ENCODE measurements at regions of chr3 and their contacts with region 1.

Region 1: GRCh38 chr3:31288641-31289100 is 244.1 kb upstream of the STT3B start:
- DNase-seq: peak; percentile 97
- ATAC-seq: peak; percentile 89
- H3K4me3 ChIP-seq: peak overlapping the region in 1 of 3 experiments; percentile 7; a peak in 1 of 6 replicates
- H3K27ac ChIP-seq: peak overlapping the region; percentile 75
- H3K4me1 ChIP-seq: peaks cover 97% of the 10 kb centered on the region
- H3K27me3 ChIP-seq: no peaks in the 10 kb centered on the region
- CTCF ChIP-seq: 0 out of 2 replicates have a peak, but pooled peaks have one; percentile 13
- EP300 ChIP-seq: peak in 1 of 2 experiments; percentile 94; a peak in 2 of 4 replicates
- POLR2A ChIP-seq: no peak
- RAD21 ChIP-seq: no peak

Region 2: GRCh38 chr3:31203960-31204795 is 84.5 kb before region 1 on chr3:
- CTCF ChIA-PET with region 1: no interaction called
- POLR2A ChIA-PET with region 1: no interaction called
- in situ Hi-C with region 1: no loop called
- intact Hi-C with region 1: loop called (anchors 1 kb)
- DNase-seq: peak; percentile 74
- ATAC-seq: peak; percentile 90
- H3K4me3 ChIP-seq: no peak overlapping the region; a peak in 1 of 6 replicates
- H3K27ac ChIP-seq: peak overlapping the region; percentile 19
- H3K4me1 ChIP-seq: peaks cover 18% of the 10 kb centered on the region
- H3K27me3 ChIP-seq: no peaks in the 10 kb centered on the region
- CTCF ChIP-seq: no peak
- EP300 ChIP-seq: no peak
- POLR2A ChIP-seq: no peak
- RAD21 ChIP-seq: no peak

Region 3: DNA sequence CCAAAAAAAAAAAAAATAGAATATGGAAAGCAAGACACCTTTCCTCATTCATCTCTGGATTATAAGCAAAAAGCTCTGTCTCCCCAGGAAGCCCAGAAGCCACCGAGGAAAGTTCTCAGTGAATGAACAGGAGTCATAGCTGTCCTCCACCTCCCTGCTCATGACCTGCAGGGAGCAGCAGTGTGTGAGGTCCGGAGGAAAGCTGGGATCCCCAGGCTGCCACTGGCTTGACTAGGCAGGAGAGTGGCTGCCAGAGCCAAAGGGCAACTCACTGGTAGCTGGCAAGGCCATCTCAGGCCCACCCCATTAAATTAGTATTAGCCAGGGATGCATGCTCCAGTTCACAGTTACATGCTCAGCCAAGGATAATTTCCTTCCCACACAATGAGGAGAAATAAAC is 52.5 kb after region 1 on chr3:
- CTCF ChIA-PET with region 1: no interaction called
- POLR2A ChIA-PET with region 1: interaction called, 6 read pairs
- in situ Hi-C with region 1: no loop called
- intact Hi-C with region 1: loop called (anchors 5 kb)
- DNase-seq: peak; percentile 52
- ATAC-seq: peak; percentile 100
- H3K4me3 ChIP-seq: no peak overlapping the region
- H3K27ac ChIP-seq: no peak overlapping the region
- H3K4me1 ChIP-seq: peaks cover 19% of the 10 kb centered on the region
- H3K27me3 ChIP-seq: no peaks in the 10 kb centered on the region
- CTCF ChIP-seq: peak; percentile 80
- EP300 ChIP-seq: no peak
- POLR2A ChIP-seq: no peak
- RAD21 ChIP-seq: peak; percentile 84

Region 4: GRCh38 chr3:31377045-31377642 is 88.5 kb after region 1 on chr3:
- CTCF ChIA-PET with region 1: no interaction called
- POLR2A ChIA-PET with region 1: interaction called, 6 read pairs
- in situ Hi-C with region 1: loop called (anchors 5 kb)
- intact Hi-C with region 1: loop called (anchors 1 kb)
- DNase-seq: peak; percentile 100
- ATAC-seq: peak; percentile 98
- H3K4me3 ChIP-seq: no peak overlapping the region; a peak in 1 of 6 replicates
- H3K27ac ChIP-seq: peak overlapping the region; percentile 74
- H3K4me1 ChIP-seq: peaks cover 50% of the 10 kb centered on the region
- H3K27me3 ChIP-seq: no peaks in the 10 kb centered on the region; a peak in 1 of 5 replicates
- CTCF ChIP-seq: 0 out of 2 replicates have a peak, but pooled peaks have one; percentile 12
- EP300 ChIP-seq: peak; percentile 99 to 100
- POLR2A ChIP-seq: no peak
- RAD21 ChIP-seq: peak; percentile 44; the same call in 1 of the 2 replicates

Region 5: DNA sequence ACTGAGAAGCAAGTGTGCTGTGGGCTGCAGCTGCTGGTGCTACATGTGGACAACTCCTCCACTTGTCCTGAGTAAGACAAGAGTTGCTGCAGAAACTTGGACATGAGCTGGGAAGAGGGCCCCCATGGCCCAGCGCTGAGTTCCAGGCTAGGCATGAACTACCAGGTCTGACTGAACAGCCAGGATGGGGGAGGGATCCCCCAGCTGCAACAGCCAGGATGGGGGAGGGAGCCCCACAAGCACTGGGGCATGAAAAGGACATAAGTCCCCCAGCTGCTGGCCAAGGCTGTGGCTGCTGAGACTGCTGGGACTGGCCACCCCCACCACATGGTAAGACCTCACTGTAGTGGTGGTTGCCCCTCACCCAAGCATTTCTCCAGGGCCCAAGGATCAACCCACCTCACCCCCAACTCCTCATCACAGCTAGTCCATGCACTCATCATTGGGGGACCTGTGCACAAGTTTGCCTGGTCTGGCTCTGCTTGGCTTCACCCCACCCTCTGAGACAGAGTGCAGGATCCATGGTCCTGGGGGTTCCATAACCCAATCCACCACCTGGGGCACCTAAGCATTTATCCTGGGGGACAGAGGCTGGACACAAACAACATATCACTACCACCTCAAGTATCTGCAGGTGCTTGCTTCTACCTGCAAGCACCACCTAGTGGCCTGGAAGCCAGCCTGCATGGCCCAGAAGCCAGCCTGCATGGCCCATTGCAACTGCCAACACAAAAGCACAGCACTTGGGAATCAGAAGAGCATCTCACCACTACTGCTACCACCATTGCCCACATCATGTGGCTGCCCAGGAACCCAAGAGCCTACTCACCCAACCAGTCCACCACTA is 159.6 kb after region 1 on chr3:
- CTCF ChIA-PET with region 1: no interaction called
- POLR2A ChIA-PET with region 1: no interaction called
- in situ Hi-C with region 1: no loop called
- intact Hi-C with region 1: loop called (anchors 1 kb)
- DNase-seq: peak; percentile 53
- ATAC-seq: peak; percentile 100
- H3K4me3 ChIP-seq: no peak overlapping the region
- H3K27ac ChIP-seq: no peak overlapping the region
- H3K4me1 ChIP-seq: 0 out of 2 replicates have a peak, but pooled peaks cover 6% of the 10 kb centered on the region
- H3K27me3 ChIP-seq: no peaks in the 10 kb centered on the region
- CTCF ChIP-seq: peak; percentile 92
- EP300 ChIP-seq: no peak
- POLR2A ChIP-seq: no peak
- RAD21 ChIP-seq: peak; percentile 88

Measured in HepG2 (cell line).